Stomach (tissue), 19 donors: ENCODE measurements at regions of chr11 and their contacts with region 1.

Region 1: GRCh38 chr11:58654079-58654907 is 31.8 kb downstream of the CNTF start:
- DNase-seq: peak; percentile 84 to 92
- H3K4me3 ChIP-seq: no peak overlapping the region
- H3K27ac ChIP-seq: no peak overlapping the region
- H3K4me1 ChIP-seq: peaks cover 0 to 8% (median 3%) of the 10 kb centered on the region in 4 donors
- H3K27me3 ChIP-seq: no peaks in the 10 kb centered on the region
- CTCF ChIP-seq: peak in 5 of 7 experiments; percentile 72 to 91 (median 84)
- EP300 ChIP-seq: no peak
- POLR2A ChIP-seq: no peak

Region 2: DNA sequence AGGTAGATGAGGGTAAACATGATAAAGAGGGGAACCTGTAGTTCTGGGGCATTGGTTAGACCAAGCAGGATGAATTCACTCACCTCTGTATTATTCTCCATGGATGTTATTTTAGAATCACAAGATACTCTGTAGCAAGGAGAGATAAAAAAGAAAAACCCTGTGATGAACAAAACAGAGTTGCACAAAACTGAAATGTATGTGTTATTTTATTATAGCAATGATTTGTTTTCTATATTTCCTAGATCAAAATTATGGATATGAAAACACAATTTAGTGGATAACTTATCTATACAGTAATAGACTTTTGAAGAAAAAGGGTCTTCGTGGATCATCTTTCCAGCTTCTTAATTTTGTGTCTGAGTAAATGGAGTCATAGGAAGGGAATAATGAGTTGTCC is 295.3 kb before region 1 on chr11 and contains the start of gene OR5B17:
- intact Hi-C with region 1: no loop called
- DNase-seq: no peak
- H3K4me3 ChIP-seq: no peak within 1 kb of the TSS
- H3K27ac ChIP-seq: no peak within 1 kb of the TSS
- H3K4me1 ChIP-seq: no peaks in the 10 kb centered on the region
- H3K27me3 ChIP-seq: peaks cover 0 to under 1% (median 0%) of the 10 kb centered on the region in 3 donors
- CTCF ChIP-seq: no peak
- EP300 ChIP-seq: no peak
- POLR2A ChIP-seq: no peak
- total RNA-seq, gene OR5B17: not detected

Region 3: DNA sequence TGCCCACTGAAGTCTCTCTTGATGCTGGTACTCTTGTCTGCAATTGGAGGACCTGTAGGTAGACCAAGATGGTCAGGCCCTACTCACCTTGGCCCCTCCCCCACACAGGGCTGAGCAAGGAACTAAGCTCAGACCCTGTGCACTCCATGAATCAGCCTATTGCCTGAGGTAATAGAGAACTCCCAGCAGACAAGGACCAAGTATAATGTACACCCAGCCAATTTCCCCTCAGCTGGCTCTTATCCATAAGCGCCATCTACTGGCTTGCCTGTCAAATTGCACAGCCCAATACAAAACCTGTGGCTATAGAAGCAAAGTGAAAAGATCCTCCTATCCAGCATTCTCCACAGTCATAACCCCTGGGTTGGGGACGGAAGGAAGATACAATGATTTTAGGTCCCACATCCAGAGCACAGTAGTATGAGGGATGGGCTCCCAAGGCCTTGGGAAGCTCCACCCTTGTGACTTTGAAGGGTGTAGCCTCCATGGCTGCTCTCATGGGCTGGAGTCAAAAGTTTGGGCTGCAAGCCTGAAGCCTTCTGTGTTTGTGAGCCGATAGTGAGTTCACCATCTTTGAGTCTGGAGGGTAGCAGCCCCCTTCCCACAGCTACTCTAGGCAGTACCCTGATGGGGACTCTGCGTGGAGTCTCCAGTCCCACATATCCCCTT is 134.2 kb after region 1 on chr11:
- intact Hi-C with region 1: loop called (anchors 10 kb)
- DNase-seq: peak; percentile 66 to 70
- H3K4me3 ChIP-seq: no peak overlapping the region
- H3K27ac ChIP-seq: no peak overlapping the region
- H3K4me1 ChIP-seq: peaks cover 0 to 8% (median 4%) of the 10 kb centered on the region in 4 donors
- H3K27me3 ChIP-seq: no peaks in the 10 kb centered on the region
- CTCF ChIP-seq: peak in 5 of 7 experiments; percentile 40 to 58 (median 52)
- EP300 ChIP-seq: no peak
- POLR2A ChIP-seq: no peak

Region 4: GRCh38 chr11:59647245-59647980 is 993.1 kb after region 1 on chr11:
- intact Hi-C with region 1: no loop called
- DNase-seq: no peak
- H3K4me3 ChIP-seq: no peak overlapping the region
- H3K27ac ChIP-seq: no peak overlapping the region
- H3K4me1 ChIP-seq: no peaks in the 10 kb centered on the region
- H3K27me3 ChIP-seq: no peaks in the 10 kb centered on the region
- CTCF ChIP-seq: no peak
- EP300 ChIP-seq: no peak
- POLR2A ChIP-seq: no peak